ENCODE measurements at regions of chr6 and their contacts with region 1.

Region 1: DNA sequence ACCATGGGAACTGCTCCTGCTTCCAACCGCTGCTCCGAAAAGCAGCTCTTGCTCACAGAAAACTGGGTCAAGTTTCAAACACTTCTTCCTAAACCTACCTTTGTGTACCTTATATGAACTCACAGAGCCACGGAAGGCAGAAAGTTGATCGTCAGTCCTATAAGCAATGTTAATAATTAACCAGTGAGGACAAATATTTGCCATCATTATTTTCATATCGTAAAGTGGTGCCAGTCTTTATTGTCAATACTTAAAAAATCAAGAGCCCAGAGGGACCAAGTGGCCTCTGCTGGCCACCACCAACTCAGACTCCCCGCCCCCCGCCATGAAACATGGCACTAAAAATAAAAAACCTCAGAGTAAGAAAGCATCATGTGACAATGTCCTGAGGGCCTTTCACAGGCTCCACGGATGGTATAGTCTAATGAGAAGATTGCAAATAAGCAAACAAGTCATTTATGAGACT is 9.1 kb upstream of the PBOV1 start:
- DNase-seq: no peak
- H3K4me3 ChIP-seq: no peak overlapping the region
- H3K27ac ChIP-seq: peak overlapping the region in 4 of 59 donors; percentile 16 to 58 (median 52)
- H3K27me3 ChIP-seq: no peaks in the 10 kb centered on the region
- CTCF ChIP-seq: no peak

Region 2: DNA sequence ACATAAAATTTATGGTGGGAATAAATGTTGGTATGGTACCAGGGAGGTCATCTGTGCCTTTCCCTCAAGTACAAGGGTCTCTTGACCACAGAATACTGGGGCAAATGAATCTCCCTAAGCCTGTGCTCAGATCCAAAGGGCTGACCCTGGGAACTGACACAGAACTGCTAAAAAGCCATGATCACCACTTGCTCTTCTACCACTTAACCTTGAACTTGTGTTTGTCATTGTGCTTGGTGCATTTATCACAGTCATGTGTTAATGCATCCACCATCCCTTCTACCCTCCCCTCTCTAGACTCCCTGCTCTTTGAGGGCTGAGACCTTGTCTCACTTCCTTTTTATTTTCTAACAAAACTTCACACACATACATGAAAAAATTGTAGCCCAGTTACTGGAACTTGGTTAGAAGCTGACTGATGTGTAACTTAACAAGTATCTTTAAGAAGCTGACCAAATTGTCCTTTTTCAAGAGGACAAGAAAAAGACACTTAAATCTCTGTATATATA is 37.1 kb after region 1 on chr6:
- intact Hi-C with region 1: loop called in 1 of 2 experiments (anchors 5 kb)
- DNase-seq: no peak
- H3K4me3 ChIP-seq: peak overlapping the region in 1 of 59 donors; percentile 9
- H3K27ac ChIP-seq: peak overlapping the region; percentile 29 to 98 (median 86)
- H3K27me3 ChIP-seq: no peaks in the 10 kb centered on the region
- CTCF ChIP-seq: no peak

Measured in dorsolateral prefrontal cortex (tissue), 120 donors.